ENCODE measurements at regions of chr6 and their contacts with region 1.

Region 1: DNA sequence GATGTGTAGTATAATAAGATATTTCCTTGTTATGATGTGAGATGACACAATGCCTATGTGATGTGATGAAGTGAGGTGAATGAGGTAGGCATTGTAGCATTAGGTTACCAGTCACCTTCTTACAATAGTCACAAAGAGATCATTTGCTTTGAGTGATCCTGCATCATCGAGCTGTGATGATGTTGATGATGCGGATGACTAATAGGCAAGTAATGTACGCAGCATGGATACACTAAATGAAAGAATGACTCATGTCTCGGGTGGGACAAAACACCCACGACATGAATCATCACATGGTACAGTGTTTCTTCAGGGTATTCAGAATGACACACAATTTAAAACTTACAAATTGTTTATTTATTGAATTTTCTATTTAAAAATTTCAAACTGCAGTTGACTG is 806.3 kb upstream of the GJE1 start:
- DNase-seq: peak; percentile 96
- H3K4me3 Mint-ChIP-seq: peak overlapping the region; percentile 37
- H3K27ac Mint-ChIP-seq: peak overlapping the region; percentile 88
- H3K4me1 Mint-ChIP-seq: peaks cover 12% of the 10 kb centered on the region
- H3K27me3 Mint-ChIP-seq: no peaks in the 10 kb centered on the region
- CTCF ChIP-seq: no peak

Region 2: GRCh38 chr6:141421376-141421775 is 95.0 kb after region 1 on chr6:
- CTCF ChIA-PET with region 1: no interaction called
- POLR2A ChIA-PET with region 1: no interaction called
- intact Hi-C with region 1: loop called (anchors 5 kb)
- DNase-seq: peak; percentile 82
- H3K4me3 Mint-ChIP-seq: peak overlapping the region; percentile 75
- H3K27ac Mint-ChIP-seq: peak overlapping the region; percentile 79
- H3K4me1 Mint-ChIP-seq: peaks cover 10% of the 10 kb centered on the region
- H3K27me3 Mint-ChIP-seq: no peaks in the 10 kb centered on the region
- CTCF ChIP-seq: no peak

Region 3: GRCh38 chr6:141552473-141552878 is 226.1 kb after region 1 on chr6:
- CTCF ChIA-PET with region 1: no interaction called
- POLR2A ChIA-PET with region 1: no interaction called
- intact Hi-C with region 1: loop called (anchors 2 kb)
- DNase-seq: peak; percentile 95
- H3K4me3 Mint-ChIP-seq: peak overlapping the region; percentile 30
- H3K27ac Mint-ChIP-seq: peak overlapping the region; percentile 79
- H3K4me1 Mint-ChIP-seq: peaks cover 21% of the 10 kb centered on the region
- H3K27me3 Mint-ChIP-seq: no peaks in the 10 kb centered on the region
- CTCF ChIP-seq: no peak

Region 4: DNA sequence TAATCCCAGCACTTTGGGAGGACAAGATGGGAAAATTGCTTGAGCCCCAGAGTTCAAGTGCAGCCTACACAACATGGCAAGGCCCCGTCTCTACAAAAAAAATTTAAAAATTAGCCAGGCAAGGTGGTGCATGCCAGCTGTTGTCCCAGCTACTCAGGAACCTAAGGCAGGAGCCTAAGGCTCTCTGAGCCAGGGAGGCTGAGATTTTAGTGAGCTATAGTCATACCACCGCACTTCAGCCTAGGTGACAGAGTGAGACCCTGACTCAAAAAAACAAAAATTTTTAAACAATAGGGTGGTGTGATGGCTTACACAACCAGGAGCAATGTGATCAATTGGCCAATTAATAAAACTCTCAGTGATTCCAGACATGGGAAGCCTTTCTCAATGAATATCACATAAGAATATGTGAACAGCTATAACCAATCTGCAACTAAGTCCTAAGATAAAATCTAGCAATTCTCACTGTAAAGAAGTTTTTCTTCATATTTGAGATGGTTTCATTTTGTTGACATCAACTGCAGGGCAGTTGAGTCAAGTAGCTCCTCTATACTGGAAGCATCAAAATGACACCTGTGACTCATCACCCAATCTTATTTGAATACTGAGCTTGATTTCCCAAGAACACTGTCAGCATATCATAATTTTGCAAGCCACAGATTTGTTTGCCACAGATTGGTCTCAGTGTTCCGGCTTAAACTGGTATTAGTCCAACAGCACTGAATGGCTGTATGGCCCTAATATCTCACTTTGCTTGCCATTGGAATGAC is 637.3 kb after region 1 on chr6:
- CTCF ChIA-PET with region 1: no interaction called
- POLR2A ChIA-PET with region 1: no interaction called
- intact Hi-C with region 1: no loop called
- DNase-seq: peak; percentile 59
- H3K4me3 Mint-ChIP-seq: no peak overlapping the region
- H3K27ac Mint-ChIP-seq: no peak overlapping the region
- H3K4me1 Mint-ChIP-seq: no peaks in the 10 kb centered on the region
- H3K27me3 Mint-ChIP-seq: no peaks in the 10 kb centered on the region
- CTCF ChIP-seq: no peak